ENCODE measurements at regions of chr7 and their contacts with region 1.

Region 1: GRCh38 chr7:44477063-44477830 is 13.2 kb downstream of the NUDCD3 start:
- DNase-seq: peak; percentile 73
- ATAC-seq: peak; percentile 99
- H3K4me3 Mint-ChIP-seq: no peak overlapping the region
- H3K27ac Mint-ChIP-seq: peak overlapping the region; percentile 4
- H3K4me1 Mint-ChIP-seq: peaks cover 33% of the 10 kb centered on the region
- H3K27me3 Mint-ChIP-seq: no peaks in the 10 kb centered on the region
- CTCF ChIP-seq: peak; percentile 92

Region 2: DNA sequence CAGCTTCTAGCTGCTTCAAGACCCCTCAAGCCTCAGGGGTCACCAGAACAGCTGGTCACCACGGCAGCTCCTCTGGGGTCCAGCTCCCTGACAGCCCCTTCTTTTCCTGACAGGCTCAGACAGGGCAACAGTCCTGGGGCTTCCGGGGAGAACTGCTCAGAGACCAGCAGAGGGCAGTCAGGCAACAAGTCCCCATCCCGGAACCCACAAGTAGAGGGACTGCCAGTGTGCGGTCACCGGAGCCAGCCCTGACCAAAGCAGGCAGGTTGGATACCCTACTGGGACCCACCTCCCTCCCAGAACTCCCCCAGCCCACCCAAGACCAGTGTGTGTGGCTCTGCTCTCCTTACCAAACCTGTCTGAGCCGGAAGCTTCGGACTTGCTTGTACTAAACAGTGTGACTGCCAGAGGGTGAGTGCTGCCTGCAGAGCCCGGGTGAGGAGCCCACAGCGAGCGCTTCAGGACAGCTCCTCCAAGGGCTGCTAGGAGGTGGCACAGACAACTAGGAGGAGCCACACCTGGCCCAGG is 236.2 kb before region 1 on chr7:
- CTCF ChIA-PET with region 1: interaction called, 10 read pairs
- POLR2A ChIA-PET with region 1: interaction called, 3 read pairs
- intact Hi-C with region 1: loop called (anchors 5 kb)
- DNase-seq: peak; percentile 77
- ATAC-seq: peak; percentile 92
- H3K4me3 Mint-ChIP-seq: no peak overlapping the region
- H3K27ac Mint-ChIP-seq: no peak overlapping the region
- H3K4me1 Mint-ChIP-seq: no peaks in the 10 kb centered on the region
- H3K27me3 Mint-ChIP-seq: no peaks in the 10 kb centered on the region
- CTCF ChIP-seq: peak; percentile 74

Region 3: DNA sequence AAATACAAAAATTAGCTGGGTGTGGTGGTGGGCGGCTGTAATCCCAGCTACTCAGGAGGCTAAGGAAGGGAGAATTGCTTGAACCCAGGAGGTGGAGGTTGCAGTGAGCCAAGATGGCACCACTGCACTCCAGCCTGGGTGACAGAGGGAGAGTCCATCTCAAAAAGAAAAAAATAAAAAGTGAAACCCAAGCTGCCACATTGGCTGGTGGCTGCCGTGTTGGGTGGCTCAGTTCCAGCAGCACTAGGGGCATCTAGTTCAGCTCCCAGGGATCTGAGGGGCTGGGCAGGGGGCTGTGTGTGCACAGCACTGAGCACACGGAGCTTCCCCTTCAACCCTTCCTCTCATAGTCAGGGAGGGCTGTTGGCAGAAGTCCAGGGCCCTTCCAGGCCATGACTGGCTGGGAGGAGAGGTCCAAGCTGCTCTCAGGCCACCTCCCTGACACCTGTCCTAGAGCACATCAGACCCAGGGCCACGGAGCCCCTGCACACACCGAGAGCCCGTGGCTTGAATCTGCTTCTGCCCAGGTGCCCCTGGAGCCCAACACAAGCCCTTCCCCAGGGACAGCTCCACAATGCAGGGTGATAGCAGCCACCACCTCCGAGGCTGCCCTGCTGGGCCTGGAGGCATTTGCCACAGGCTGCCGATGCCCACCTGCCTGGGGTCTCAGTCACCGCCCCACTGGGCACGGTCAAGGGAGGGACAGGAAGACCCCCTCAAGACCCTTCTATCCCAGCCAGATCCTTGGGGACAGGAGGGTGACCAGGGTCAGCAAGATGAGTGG is 229.2 kb before region 1 on chr7:
- CTCF ChIA-PET with region 1: no interaction called
- POLR2A ChIA-PET with region 1: no interaction called
- intact Hi-C with region 1: loop called (anchors 5 kb)
- DNase-seq: no peak
- ATAC-seq: no peak
- H3K4me3 Mint-ChIP-seq: no peak overlapping the region
- H3K27ac Mint-ChIP-seq: no peak overlapping the region
- H3K4me1 Mint-ChIP-seq: no peaks in the 10 kb centered on the region
- H3K27me3 Mint-ChIP-seq: no peaks in the 10 kb centered on the region
- CTCF ChIP-seq: no peak

Region 4: DNA sequence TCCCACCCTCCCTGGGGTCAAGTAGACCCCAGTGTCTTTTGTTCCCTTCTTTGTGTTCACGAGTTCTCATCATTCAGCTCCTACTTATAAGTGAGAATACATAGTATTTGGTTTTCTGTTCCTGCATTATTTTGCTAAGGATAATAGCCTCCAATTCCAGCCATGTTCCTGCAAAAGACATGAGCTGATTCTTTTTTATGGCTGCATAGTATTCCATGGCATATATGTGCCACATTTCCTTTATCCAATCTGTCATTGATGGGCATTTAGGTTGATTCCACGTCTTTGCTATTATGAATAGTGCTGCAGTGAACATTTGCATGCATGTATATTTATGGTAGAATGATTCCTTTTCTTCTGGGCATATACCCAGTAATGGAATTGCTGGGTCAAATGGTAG is 123.6 kb before region 1 on chr7:
- CTCF ChIA-PET with region 1: no interaction called
- POLR2A ChIA-PET with region 1: no interaction called
- intact Hi-C with region 1: loop called (anchors 5 kb)
- DNase-seq: no peak
- ATAC-seq: no peak
- H3K4me3 Mint-ChIP-seq: no peak overlapping the region
- H3K27ac Mint-ChIP-seq: no peak overlapping the region
- H3K4me1 Mint-ChIP-seq: no peaks in the 10 kb centered on the region
- H3K27me3 Mint-ChIP-seq: peaks cover 33% of the 10 kb centered on the region
- CTCF ChIP-seq: no peak

Region 5: DNA sequence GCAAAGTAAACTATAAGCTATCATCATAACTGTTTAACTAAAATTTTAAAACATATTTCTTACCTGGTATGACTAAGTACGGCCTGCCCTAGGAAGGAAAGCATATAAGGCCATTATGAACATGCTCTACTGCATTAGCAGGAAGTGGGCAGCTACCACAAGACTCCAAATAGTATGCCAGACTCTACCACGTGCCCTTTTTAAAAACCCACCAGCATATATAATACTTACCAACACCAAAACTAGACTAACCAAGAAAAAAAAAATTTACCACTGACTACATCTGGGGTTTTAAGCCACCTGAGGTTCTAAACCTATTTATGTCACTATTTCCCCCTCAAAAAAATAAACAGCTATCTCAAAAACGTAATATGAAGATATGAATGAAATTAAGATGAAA is 16.9 kb before region 1 on chr7:
- CTCF ChIA-PET with region 1: interaction called, 12 read pairs
- POLR2A ChIA-PET with region 1: interaction called, 3 read pairs
- intact Hi-C with region 1: no loop called
- DNase-seq: peak; percentile 85
- ATAC-seq: peak; percentile 83
- H3K4me3 Mint-ChIP-seq: peak overlapping the region; percentile 67
- H3K27ac Mint-ChIP-seq: peak overlapping the region; percentile 98
- H3K4me1 Mint-ChIP-seq: peaks cover 68% of the 10 kb centered on the region
- H3K27me3 Mint-ChIP-seq: no peaks in the 10 kb centered on the region
- CTCF ChIP-seq: no peak

Region 6: DNA sequence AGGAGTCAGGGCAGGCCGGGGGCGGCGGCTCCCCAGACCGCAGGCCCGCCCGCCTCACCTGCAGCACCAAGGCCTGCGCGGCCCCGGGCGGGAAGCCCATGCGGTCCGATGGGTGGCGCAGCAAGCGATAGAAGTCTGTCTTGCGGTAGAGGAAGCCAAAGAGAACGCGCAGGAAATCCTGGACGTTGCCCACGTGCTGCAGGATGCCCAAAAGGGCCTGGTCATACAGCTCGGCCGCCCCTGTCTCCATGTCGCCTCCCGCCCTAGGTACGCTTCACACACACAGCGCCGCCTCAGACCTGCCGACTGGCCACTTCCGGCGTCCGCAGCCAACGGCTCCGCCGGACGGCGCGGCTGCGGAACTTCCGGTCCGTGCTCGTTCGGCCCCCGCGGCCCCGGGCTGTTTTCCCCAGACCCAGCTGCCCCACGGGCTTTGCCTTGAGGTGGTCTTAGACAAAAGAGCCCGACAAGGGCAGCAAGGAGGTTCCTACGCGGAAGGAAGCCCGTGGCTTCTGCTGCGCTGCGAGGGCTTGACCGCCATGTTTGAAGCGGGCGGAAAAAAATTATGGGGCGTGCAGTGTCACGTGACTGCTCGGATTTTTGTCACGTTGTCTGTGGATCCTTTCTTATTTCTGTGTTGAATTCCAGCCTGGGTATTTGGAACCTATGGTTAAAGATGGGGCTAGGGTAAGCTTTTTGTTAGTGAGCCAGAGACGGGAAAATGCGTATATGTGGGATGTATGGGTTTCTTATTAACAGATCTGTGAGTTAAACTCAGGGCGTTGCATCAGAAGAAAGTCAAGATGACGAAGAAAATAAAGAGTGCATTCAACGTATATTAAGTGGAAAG is 13.3 kb after region 1 on chr7 and contains the start of gene NUDCD3:
- CTCF ChIA-PET with region 1: interaction called, 16 read pairs
- POLR2A ChIA-PET with region 1: interaction called, 13 read pairs
- intact Hi-C with region 1: no loop called
- DNase-seq: peak; percentile 86
- ATAC-seq: peak; percentile 78
- H3K4me3 Mint-ChIP-seq: peak within 1 kb of the TSS; percentile 92
- H3K27ac Mint-ChIP-seq: peak within 1 kb of the TSS; percentile 97
- H3K4me1 Mint-ChIP-seq: peaks cover 40% of the 10 kb centered on the region
- H3K27me3 Mint-ChIP-seq: peaks cover 2% of the 10 kb centered on the region
- CTCF ChIP-seq: no peak
- total RNA-seq, gene NUDCD3: 102 to 107 TPM